ENCODE measurements at regions of chr5 and their contacts with region 1.

Region 1: DNA sequence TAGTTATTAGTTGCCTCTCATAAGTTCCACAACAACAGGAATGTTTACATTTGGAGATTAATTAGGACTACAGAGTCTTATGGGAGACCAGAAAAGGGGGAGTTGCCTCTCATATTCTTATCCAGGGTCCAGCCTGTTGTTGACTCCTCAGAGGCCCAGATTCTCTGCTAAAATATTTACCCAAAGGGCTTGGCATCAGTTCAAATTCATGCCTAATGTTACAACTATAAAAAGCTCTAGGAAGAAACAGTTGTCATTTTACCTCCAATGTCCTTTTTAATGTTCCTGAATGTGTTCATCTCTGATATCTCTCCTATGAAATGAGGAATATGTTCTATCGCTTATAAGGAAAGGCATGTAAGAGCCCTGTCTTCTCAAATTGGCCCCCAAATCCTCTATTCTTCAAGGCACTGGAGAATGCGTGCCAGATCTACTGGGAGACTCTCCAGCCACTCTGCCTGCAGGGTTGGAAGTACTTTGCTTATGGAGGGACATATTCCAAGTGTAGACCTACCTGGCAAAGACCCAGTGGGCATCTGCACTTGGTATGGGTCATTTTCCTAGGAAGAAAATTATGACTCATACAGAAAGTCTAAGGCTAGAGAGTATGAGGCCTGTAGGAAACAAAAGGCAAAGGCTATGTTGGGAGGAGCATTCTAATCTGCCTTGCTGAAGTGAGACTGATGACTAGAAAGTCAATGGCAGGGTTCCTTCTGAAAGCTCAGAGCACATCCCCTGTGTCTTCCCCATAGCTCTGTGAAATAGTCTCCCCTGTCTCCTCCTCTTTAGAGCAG is 192.6 kb downstream of the ESM1 start:
- DNase-seq: no peak
- H3K4me3 Mint-ChIP-seq: no peak overlapping the region
- H3K27ac Mint-ChIP-seq: peak overlapping the region; percentile 88
- H3K4me1 Mint-ChIP-seq: peaks cover 35% of the 10 kb centered on the region
- H3K27me3 Mint-ChIP-seq: peaks cover 25% of the 10 kb centered on the region

Region 2: GRCh38 chr5:54610197-54610944 is 182.4 kb before region 1 on chr5:
- intact Hi-C with region 1: loop called (anchors 1 kb)
- DNase-seq: peak; percentile 46
- H3K4me3 Mint-ChIP-seq: peak overlapping the region; percentile 38
- H3K27ac Mint-ChIP-seq: peak overlapping the region; percentile 58
- H3K4me1 Mint-ChIP-seq: peaks cover 29% of the 10 kb centered on the region
- H3K27me3 Mint-ChIP-seq: no peaks in the 10 kb centered on the region

Region 3: GRCh38 chr5:54719384-54720283 is 73.2 kb before region 1 on chr5:
- intact Hi-C with region 1: loop called (anchors 1 kb)
- DNase-seq: no peak
- H3K4me3 Mint-ChIP-seq: no peak overlapping the region
- H3K27ac Mint-ChIP-seq: peak overlapping the region; percentile 54
- H3K4me1 Mint-ChIP-seq: peaks cover 47% of the 10 kb centered on the region
- H3K27me3 Mint-ChIP-seq: no peaks in the 10 kb centered on the region

Region 4: GRCh38 chr5:54758038-54758437 is 34.8 kb before region 1 on chr5:
- intact Hi-C with region 1: loop called (anchors 5 kb)
- DNase-seq: no peak
- H3K4me3 Mint-ChIP-seq: no peak overlapping the region
- H3K27ac Mint-ChIP-seq: no peak overlapping the region
- H3K4me1 Mint-ChIP-seq: peaks cover 30% of the 10 kb centered on the region
- H3K27me3 Mint-ChIP-seq: peaks cover 2% of the 10 kb centered on the region

Region 5: GRCh38 chr5:54867310-54867944 is 74.6 kb after region 1 on chr5:
- intact Hi-C with region 1: loop called (anchors 1 kb)
- DNase-seq: no peak
- H3K4me3 Mint-ChIP-seq: no peak overlapping the region
- H3K27ac Mint-ChIP-seq: no peak overlapping the region
- H3K4me1 Mint-ChIP-seq: peaks cover 29% of the 10 kb centered on the region
- H3K27me3 Mint-ChIP-seq: peaks cover 64% of the 10 kb centered on the region

Region 6: DNA sequence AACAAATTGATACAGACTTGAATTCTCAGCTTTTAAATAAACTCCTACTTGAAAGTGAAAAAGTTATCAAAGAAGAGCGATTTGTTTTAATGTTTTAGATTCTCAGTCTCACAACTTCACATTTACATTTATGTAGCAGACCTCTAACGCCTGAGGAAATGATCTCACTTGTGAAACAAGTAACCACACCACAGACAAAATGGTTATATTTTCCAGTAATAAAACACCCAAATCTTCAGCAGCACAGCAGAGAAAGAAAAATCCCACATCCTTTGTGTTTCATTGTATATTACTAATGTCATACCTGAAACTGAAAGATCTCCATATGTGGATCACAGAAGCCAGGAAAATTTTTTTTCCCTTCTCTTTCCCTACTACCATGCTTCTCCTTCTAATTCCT is 279.9 kb after region 1 on chr5:
- intact Hi-C with region 1: no loop called
- DNase-seq: no peak
- H3K4me3 Mint-ChIP-seq: peak overlapping the region; percentile 32
- H3K27ac Mint-ChIP-seq: peak overlapping the region; percentile 75
- H3K4me1 Mint-ChIP-seq: peaks cover 46% of the 10 kb centered on the region
- H3K27me3 Mint-ChIP-seq: no peaks in the 10 kb centered on the region